ENCODE measurements at regions of chr1 and their contacts with region 1.

Region 1: GRCh38 chr1:58783993-58784757 is at the start of gene JUN:
- DNase-seq: peak; percentile 100
- H3K4me3 ChIP-seq: peak within 1 kb of the TSS; percentile 72 to 92 (median 84)
- H3K27ac ChIP-seq: peak within 1 kb of the TSS; percentile 99 to 100 (median 99)
- H3K4me1 ChIP-seq: peaks cover under 1 to 25% (median 15%) of the 10 kb centered on the region in 4 donors
- H3K27me3 ChIP-seq: no peaks in the 10 kb centered on the region
- CTCF ChIP-seq: no peak
- EP300 ChIP-seq: peak; percentile 57
- POLR2A ChIP-seq: peak; percentile 100
- total RNA-seq, gene JUN: 315 to 440 (median 376) TPM

Region 2: DNA sequence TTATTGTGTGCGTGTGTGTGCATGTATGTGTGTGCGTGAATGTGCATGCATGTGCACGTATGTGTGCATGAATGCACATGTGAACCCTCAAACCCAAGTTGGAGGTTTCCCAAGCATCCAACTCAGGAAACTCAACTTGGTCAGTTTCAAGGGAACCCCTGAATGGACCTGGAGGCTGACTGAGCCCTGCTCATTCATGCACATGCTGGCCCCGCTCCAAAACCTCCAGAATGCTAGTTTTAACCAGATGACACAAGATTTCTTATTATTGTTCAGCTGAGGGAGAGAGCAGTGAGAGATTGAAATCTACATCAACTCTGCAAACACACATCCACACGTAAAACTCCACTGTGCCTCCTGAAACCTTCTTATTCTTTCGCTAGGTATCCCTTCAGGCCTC is 342.1 kb before region 1 on chr1:
- in situ Hi-C with region 1: no loop called
- intact Hi-C with region 1: no loop called
- DNase-seq: no peak
- H3K4me3 ChIP-seq: no peak overlapping the region
- H3K27ac ChIP-seq: no peak overlapping the region
- H3K4me1 ChIP-seq: no peaks in the 10 kb centered on the region
- H3K27me3 ChIP-seq: no peaks in the 10 kb centered on the region
- CTCF ChIP-seq: no peak
- EP300 ChIP-seq: no peak
- POLR2A ChIP-seq: no peak

Region 3: GRCh38 chr1:58883037-58883887 is 99.1 kb after region 1 on chr1:
- in situ Hi-C with region 1: loop called in 1 of 4 experiments (anchors 10 kb)
- intact Hi-C with region 1: no loop called
- DNase-seq: peak; percentile 72
- H3K4me3 ChIP-seq: no peak overlapping the region
- H3K27ac ChIP-seq: peak overlapping the region; percentile 47 to 75 (median 60)
- H3K4me1 ChIP-seq: peaks cover 12 to 54% (median 40%) of the 10 kb centered on the region in 4 donors
- H3K27me3 ChIP-seq: no peaks in the 10 kb centered on the region
- CTCF ChIP-seq: no peak
- EP300 ChIP-seq: peak; percentile 29
- POLR2A ChIP-seq: no peak

Region 4: GRCh38 chr1:59057211-59057694 is 273.1 kb after region 1 on chr1:
- in situ Hi-C with region 1: loop called in 1 of 4 experiments (anchors 25 kb)
- intact Hi-C with region 1: no loop called
- DNase-seq: peak; percentile 47
- H3K4me3 ChIP-seq: no peak overlapping the region
- H3K27ac ChIP-seq: peak overlapping the region; percentile 55 to 70 (median 62)
- H3K4me1 ChIP-seq: peaks cover 8 to 26% (median 13%) of the 10 kb centered on the region in 4 donors
- H3K27me3 ChIP-seq: no peaks in the 10 kb centered on the region
- CTCF ChIP-seq: no peak
- EP300 ChIP-seq: no peak
- POLR2A ChIP-seq: peak; percentile 20

Region 5: DNA sequence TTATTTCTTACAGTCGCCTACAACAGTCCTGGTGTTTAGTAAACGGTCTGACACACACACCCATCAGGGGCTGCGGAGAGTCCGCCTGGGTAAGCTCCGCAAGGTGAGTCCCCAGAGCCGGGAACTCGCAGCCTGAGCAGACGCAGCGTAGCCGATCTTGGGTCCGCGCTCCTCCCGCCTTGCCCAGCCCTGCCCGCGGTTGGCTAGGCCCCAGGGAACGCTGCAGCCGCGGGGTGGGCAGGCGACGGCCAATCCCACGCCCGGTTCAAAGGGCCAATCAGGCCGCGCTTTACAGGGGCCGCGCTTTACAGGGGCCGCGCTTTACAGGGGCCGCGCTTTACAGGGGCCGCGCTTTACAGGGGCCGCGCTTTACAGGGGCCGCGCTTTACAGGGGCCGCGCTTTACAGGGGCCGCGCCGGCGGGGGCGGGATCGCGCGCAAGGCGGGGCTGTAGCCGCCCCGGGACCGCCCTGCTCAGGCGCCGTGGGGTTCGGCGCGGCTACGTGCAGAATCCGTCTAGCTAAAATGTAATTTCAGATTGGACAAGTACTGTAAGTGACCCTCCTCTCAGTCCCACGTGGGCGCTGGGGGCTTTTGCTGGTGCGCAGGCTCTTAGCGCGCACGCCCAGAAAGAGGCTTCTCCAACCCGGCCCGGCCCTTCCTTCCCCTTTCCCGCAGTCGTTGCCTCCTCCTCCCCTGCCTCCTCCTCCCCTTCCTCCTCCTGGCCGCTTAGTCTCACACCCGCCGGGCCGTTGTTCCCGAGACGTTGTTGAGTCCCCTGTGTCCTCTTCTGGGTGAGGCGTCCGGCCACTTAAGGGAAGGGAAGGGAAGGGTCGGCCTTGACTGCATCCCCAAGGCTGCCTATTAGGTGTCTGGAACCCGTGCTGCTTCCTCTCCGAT is 512.4 kb after region 1 on chr1 and contains the start of gene FGGY:
- in situ Hi-C with region 1: loop called in 3 of 4 experiments (anchors 10 to 25 kb)
- intact Hi-C with region 1: no loop called
- DNase-seq: peak; percentile 97
- H3K4me3 ChIP-seq: peak within 1 kb of the TSS; percentile 34 to 57 (median 41)
- H3K27ac ChIP-seq: peak within 1 kb of the TSS; percentile 92 to 98 (median 95)
- H3K4me1 ChIP-seq: peaks cover 11 to 28% (median 14%) of the 10 kb centered on the region in 4 donors
- H3K27me3 ChIP-seq: no peaks in the 10 kb centered on the region
- CTCF ChIP-seq: peak in 1 of 5 experiments; percentile 18
- EP300 ChIP-seq: no peak
- POLR2A ChIP-seq: peak; percentile 92
- total RNA-seq, gene FGGY: 18.2 to 97.7 (median 27.1) TPM

Region 6: GRCh38 chr1:59446257-59446901 is 662.2 kb after region 1 on chr1:
- in situ Hi-C with region 1: no loop called
- intact Hi-C with region 1: loop called (anchors 5 kb)
- DNase-seq: peak; percentile 10
- H3K4me3 ChIP-seq: no peak overlapping the region
- H3K27ac ChIP-seq: peak overlapping the region; percentile 60 to 78 (median 67)
- H3K4me1 ChIP-seq: peaks cover 4 to 21% (median 9%) of the 10 kb centered on the region in 4 donors
- H3K27me3 ChIP-seq: no peaks in the 10 kb centered on the region
- CTCF ChIP-seq: no peak
- EP300 ChIP-seq: peak; percentile 42
- POLR2A ChIP-seq: no peak

Region 7: DNA sequence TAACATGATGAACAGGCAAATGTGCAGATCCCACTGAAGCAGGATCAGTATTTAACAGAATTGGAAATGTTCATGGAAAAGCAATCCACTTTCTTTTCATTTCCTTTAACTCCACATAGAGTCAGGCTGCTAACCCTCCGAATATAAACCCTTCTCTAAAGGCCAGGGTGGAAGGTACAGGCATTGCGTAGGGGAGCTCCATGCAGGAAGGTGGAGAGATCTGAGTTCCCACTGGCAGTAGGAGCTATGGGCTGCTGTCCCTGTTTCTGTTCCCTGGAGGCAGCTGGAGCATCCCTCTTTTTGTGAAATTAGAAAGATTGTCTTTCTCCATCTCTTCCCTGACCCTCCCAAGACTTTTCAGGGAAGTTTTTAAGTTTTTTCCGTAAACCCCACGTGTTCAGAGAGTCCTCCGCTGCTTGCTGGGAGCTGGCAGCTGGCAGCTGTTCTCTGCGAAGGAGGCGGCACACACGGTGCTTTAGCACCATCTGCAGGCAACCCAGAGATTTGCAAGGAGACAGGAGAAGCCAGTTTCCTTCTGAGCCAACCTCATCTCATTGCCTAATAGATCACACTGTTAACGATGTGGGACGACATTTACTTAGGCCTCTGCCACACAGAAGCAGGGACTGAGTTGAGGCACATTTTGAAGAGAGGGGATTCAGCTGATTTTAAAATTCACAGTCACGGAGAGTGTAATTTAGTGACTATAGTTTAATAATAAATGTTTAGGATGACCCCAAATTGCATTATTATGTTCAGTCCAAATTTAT is 975.2 kb after region 1 on chr1:
- in situ Hi-C with region 1: no loop called
- intact Hi-C with region 1: loop called (anchors 10 kb)
- DNase-seq: peak; percentile 82
- H3K4me3 ChIP-seq: peak overlapping the region in 2 of 4 donors; percentile 2 to 15
- H3K27ac ChIP-seq: peak overlapping the region; percentile 46 to 70 (median 58)
- H3K4me1 ChIP-seq: peaks cover 4 to 9% (median 6%) of the 10 kb centered on the region in 4 donors
- H3K27me3 ChIP-seq: no peaks in the 10 kb centered on the region
- CTCF ChIP-seq: peak; percentile 91 to 96 (median 92)
- EP300 ChIP-seq: no peak
- POLR2A ChIP-seq: no peak

Measured in transverse colon (tissue), 4 donors.